ENCODE measurements at regions of chr1 and their contacts with region 1.

Region 1: DNA sequence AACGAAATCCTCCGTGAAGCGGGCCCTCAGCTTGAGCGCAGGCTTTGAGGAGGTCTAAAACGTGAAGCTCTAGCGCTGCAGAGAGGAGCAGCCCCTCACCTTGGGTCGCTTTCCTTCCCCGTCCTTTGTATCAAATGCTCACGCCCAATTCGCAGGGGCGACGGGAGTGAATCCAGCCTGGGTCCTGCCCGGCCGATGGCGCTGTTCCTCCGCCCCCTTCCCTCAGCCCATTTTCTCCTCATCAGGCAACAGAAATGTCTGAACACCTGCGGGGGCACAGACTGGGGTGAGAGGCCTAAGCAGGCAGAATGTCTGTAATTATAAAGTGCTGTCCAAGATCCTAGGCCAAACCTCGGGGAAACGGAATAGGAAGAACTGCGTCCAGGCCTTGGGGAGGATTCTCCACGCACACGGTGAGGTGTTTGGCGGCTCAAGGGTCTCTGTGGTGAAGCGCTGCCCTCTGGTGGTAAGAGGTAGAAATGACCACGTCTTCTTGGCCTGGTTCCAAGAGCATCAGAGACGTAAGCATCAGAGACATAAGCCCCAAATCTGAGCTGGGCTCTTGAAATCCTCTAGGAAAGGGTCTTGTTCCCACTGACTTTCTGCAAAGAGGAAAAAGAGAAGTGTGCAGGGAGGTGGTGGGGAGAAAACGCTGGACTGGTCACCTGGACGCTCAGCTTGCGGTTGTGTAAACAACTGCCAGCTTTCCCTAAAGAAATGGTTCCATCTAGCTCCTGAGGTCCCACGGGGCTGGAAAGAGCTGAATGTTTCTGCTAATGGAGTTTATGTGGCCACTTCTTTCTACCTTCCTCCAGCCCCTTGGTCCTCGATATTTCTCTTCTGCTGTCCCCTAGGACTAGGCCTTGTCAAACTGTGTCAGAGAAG is 92.1 kb upstream of the CD53 start:
- DNase-seq: no peak
- H3K4me3 ChIP-seq: no peak overlapping the region
- H3K27me3 ChIP-seq: peaks cover 5% of the 10 kb centered on the region
- CTCF ChIP-seq: peak; percentile 80

Region 2: DNA sequence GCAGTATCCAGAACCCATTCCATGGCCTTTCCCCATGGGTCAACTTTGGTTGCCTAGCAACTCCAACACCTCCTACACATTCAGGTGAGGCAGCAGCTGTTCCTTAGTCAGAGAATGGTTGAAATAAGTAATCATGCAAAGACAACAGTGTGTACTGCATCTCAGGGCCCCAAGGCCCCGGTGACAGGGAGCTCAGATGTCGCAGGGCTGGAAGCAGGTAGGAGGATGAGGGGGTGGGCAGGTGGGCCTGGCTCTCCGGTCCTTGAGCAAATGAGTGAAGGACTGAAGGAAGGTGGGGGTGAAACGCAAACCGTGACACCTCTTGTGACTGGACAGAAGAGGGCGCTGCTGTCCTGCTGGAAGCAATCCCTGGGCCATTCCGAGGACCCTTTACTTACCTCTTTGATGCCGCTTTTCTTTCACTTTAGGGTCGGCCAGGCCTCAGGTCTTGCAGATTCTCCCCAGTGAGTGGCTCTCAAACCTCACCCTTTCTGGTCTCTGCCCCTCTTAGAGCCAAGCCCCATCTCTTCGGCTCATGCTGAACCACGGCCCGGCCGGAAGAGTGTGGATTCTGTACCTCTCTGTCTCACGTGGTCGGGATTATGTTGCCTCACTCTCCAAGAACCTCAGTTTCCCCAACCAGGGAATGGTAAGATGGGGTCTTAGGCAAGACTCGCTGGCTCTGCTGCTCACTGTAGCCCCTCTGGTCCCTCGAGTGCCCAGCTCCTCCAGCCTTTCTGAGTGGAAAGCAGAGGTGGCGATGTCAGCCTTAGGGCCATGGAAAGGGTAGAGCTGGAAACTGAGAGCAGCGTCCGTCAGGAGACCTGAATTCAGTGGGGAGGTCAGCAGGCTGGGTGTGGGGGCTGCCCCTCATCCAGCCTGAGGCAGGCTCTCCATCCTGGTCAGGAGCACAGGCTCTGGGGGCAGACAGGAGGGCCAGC is 256.3 kb before region 1 on chr1:
- CTCF ChIA-PET with region 1: interaction called, 31 read pairs
- POLR2A ChIA-PET with region 1: no interaction called
- DNase-seq: no peak
- H3K4me3 ChIP-seq: no peak overlapping the region
- H3K27me3 ChIP-seq: peaks cover 14% of the 10 kb centered on the region
- CTCF ChIP-seq: peak; percentile 66

Region 3: DNA sequence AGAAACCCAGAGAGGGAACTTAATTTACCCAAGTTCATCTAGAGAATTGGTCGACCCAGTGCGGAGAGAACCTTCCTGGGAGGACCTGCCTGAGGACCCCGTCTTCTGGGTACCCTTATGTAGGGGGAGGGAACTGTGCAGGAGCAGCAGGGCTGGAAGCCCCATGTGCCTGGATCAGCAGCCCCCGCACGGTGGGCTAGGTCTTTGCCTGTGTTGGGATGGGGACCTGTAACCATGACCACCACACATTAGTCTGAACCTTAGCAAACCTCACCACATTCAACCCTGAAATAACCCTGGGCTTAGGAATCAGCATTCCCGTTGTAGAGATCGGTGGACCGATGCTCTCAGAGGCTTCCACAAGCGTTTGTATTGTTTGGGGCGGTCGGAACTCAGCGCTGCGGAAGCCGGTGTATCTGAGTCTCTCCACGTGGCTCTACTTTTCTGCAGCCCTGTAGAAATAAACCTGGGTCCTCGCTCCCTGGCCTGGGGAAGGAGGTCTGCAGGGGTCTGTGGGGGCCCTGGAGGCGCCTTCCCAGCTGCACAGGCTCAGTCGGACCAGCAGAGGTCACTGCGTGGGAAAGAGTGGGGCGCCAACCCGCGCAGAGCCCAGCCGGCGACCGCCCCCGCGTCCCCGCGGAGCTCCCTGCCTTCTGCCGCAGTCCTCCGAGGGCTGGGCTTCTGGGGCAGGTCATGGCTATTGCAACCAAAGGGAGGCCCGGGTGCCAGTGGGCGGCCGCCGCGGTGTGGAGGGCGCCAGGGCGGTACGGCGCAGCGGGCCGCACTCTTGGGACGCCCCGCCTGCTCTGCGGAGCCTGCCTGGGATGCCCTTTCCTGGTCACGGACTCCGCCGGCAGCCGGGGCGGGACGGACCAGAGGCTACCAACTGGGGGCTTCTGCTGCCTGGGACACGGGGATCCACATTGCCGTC is 225.7 kb before region 1 on chr1:
- CTCF ChIA-PET with region 1: interaction called, 11 read pairs
- POLR2A ChIA-PET with region 1: no interaction called
- DNase-seq: no peak
- H3K4me3 ChIP-seq: no peak overlapping the region
- H3K27me3 ChIP-seq: peaks cover 19% of the 10 kb centered on the region
- CTCF ChIP-seq: peak; percentile 64

Region 4: DNA sequence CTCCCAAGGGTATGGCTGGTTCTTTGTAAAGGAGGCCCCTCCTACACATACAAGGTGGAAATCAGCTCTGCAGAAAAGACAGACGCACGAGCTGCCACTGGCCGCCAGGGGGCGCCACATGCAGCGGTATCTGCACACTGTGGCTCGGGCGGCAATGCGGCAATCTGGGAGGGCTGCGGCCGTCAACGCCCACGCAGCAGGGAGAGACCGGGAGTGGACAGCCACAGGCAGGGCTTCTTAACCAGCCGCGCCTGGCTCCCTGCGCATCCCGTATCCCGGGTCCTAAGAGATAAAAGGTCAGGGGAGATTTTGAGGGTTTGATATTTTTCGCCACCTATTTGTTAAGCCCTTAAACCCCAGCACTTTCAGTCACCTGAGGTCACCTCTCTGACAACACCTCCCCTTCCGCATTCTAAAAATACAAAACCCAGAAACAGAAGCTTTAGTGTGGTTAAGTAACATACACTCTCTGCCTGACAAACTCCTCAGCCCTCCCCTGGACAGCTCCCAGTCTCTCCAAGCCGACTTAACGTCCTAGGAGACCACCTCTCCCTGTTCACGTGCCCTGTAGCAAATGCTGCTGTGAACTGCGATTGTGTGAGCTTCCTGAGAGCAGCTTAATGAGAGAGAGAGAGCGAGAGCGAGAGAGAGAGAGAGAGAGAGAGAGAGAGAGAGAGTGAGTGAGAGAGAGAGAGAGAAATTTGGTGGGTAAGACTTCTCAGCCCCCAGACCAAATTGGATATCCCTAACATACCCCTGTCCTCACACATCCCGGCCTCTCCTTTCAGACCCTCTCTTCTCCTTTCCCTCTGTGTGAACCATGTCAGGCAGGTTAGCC is 161.2 kb before region 1 on chr1:
- CTCF ChIA-PET with region 1: interaction called, 70 read pairs
- POLR2A ChIA-PET with region 1: no interaction called
- DNase-seq: no peak
- H3K4me3 ChIP-seq: no peak overlapping the region
- H3K27me3 ChIP-seq: peaks cover 9% of the 10 kb centered on the region
- CTCF ChIP-seq: peak; percentile 89

Region 5: DNA sequence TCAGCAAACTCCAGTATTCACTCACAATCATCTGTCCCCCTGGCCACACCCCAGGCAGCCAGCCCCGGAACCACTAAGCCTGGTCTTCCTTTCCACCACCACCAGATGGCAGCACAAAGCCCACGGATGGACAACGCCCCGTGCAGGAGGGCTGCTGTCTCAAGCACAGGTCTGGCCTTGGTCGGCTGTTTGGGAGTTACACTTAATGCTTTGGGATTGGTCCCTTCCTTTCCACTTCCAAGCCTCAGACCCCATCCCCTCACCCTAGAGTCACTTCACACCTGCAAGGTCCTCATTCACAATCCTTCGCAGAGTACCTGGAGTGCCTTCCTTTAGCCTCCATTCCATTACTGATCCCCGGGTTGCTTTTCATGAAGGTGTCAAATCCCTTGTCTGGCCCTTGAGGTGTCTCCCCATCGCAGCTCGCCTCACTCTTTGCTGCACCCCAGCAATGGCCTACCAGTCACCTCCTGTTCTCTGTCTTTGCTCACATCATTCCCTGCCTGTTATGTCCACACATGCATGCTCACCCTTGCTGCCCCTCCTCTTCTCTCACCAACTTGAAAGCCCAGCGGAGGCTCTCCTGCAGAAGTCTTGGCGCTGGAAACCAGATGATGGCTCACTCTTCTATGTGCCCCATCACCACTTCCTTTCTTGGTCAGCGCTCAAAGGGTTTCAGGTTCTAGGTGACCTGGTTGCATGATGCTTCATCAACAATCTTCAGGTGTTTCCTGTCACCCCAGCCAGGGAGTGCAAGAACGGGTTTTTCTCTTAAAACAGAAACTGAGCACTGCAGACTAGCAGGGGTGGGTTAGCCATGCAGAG is 149.8 kb before region 1 on chr1:
- CTCF ChIA-PET with region 1: interaction called, 14 read pairs
- POLR2A ChIA-PET with region 1: no interaction called
- DNase-seq: no peak
- H3K4me3 ChIP-seq: no peak overlapping the region
- H3K27me3 ChIP-seq: no peaks in the 10 kb centered on the region
- CTCF ChIP-seq: peak; percentile 91

Region 6: DNA sequence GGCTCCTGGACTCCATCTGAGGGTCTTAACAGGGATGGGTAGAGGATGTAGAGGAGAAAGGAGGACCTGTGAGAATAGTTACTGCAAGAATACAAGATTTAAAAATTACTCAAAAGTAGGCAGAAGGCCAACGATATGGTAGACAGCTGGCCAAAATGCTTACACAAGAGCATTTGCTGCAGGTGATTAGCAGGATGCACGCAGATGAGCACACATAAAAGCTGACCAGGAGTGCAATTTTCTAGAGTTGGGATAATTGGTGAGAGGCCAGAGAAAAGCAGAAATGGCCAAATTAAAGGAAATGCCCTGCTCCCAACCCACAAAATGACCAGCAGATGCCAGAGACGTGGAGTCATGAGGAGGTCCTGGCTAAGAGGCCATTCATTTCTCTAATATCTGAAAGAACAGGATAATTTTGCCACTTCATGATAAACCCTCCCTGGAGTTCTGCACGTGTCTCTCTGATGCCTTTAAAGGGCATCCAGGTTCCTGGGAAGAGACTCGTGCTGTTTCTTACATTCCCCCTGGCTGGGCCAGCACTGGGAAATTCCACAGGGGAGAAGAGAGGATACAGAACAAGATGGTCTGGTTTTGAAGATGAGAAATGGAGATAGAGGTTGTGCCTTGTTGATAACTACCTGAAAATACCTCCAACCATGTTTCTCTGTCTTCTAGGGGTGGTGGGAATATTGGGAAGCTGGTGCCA is 43.8 kb before region 1 on chr1:
- CTCF ChIA-PET with region 1: no interaction called
- POLR2A ChIA-PET with region 1: no interaction called
- DNase-seq: no peak
- H3K4me3 ChIP-seq: no peak overlapping the region
- H3K27me3 ChIP-seq: no peaks in the 10 kb centered on the region
- CTCF ChIP-seq: no peak

Region 7: DNA sequence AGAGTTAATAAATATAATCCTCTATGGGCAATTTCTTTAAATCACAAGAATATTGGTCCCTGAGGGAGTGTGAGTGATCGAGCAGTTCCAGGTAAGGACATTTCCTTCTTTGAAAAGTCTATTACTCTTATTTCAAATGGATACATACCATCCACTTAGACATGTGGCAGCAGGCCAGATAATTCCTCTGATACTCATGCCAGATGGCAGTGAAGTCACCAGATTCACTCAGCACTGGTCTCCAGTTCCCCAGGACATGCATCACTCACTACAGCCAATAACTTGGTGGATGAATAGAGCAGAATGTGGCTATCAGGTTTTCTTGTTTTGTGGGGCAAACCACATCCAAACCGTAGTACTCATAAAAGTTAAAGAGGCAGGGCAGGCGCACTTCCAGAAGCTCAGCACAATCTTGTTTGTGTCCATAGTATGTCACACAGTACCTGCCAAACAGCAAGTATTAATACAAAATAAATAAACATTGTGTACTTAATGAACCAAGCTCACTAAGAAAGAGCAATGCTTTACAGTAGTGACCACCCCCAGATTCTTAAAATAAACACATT is 17.9 kb after region 1 on chr1:
- CTCF ChIA-PET with region 1: interaction called, 12 read pairs
- POLR2A ChIA-PET with region 1: no interaction called
- DNase-seq: no peak
- H3K4me3 ChIP-seq: no peak overlapping the region
- H3K27me3 ChIP-seq: no peaks in the 10 kb centered on the region
- CTCF ChIP-seq: no peak

Region 8: DNA sequence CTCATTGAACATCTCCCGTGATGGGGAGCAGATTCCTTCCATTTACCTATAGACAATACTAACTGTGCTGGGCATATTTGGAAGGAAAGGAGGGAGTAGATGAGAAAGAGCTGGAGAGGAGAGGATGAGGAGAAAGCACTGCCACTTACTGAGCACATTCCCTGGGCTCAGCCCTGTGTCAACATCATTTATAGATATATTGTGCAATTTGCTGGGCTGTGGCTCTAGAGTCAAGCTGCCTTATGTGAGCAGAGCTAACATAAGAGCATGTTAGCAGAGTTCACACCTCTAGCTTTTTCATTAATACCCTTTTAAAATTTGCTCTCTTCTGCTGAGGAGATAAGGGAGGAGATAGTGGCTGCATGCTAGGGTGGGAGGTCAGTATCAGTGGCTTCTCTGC is 69.8 kb after region 1 on chr1:
- CTCF ChIA-PET with region 1: no interaction called
- POLR2A ChIA-PET with region 1: no interaction called
- DNase-seq: no peak
- H3K4me3 ChIP-seq: no peak overlapping the region
- H3K27me3 ChIP-seq: no peaks in the 10 kb centered on the region; the same call in none of the 2 replicates
- CTCF ChIP-seq: no peak